Dorsolateral prefrontal cortex (tissue), 120 donors: ENCODE measurements at regions of chr9 and their contacts with region 1.

Region 1: DNA sequence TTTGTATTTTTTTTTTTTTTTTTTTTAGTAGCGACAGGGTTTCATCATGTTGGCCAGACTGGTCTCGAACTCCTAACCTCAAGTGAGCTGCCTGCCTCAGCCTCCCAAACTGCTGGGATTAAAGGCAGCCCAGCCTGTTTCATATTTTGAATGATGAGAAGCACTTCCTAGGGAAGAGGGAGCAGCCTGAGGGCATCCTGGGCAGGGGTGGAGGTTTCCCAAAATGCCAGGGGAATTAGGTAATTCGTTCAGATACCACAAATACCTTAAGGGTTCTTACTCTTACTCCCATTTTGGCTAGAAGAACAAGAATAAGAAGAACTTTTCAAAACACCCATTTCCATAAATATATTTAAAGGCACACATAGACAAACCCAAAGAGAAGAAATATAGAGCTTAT is 29.5 kb upstream of the RAPGEF1 start:
- DNase-seq: no peak
- H3K4me3 ChIP-seq: no peak overlapping the region
- H3K27ac ChIP-seq: no peak overlapping the region
- H3K27me3 ChIP-seq: peaks cover 0 to 5% (median 0%) of the 10 kb centered on the region in 45 donors
- CTCF ChIP-seq: no peak

Region 2: GRCh38 chr9:132154863-132155309 is 385.5 kb after region 1 on chr9:
- intact Hi-C with region 1: loop called in 1 of 2 experiments (anchors 5 kb)
- DNase-seq: no peak
- H3K4me3 ChIP-seq: no peak overlapping the region
- H3K27ac ChIP-seq: no peak overlapping the region
- H3K27me3 ChIP-seq: peaks cover 0 to 3% (median 0%) of the 10 kb centered on the region in 45 donors
- CTCF ChIP-seq: no peak